CD8-positive, alpha-beta T cell (primary cell): ENCODE measurements at regions of chr7 and their contacts with region 1.

Region 1: GRCh38 chr7:81036057-81036456 is 117.2 kb upstream of the SEMA3C start:
- DNase-seq: no peak
- ATAC-seq: no peak
- H3K4me3 ChIP-seq: no peak overlapping the region
- H3K4me3 Mint-ChIP-seq: no peak overlapping the region
- H3K27ac ChIP-seq: no peak overlapping the region
- H3K27ac Mint-ChIP-seq: no peak overlapping the region
- H3K4me1 ChIP-seq: no peaks in the 10 kb centered on the region
- H3K4me1 Mint-ChIP-seq: no peaks in the 10 kb centered on the region
- H3K27me3 ChIP-seq: no peaks in the 10 kb centered on the region
- H3K27me3 Mint-ChIP-seq: no peaks in the 10 kb centered on the region
- CTCF ChIP-seq: no peak

Region 2: DNA sequence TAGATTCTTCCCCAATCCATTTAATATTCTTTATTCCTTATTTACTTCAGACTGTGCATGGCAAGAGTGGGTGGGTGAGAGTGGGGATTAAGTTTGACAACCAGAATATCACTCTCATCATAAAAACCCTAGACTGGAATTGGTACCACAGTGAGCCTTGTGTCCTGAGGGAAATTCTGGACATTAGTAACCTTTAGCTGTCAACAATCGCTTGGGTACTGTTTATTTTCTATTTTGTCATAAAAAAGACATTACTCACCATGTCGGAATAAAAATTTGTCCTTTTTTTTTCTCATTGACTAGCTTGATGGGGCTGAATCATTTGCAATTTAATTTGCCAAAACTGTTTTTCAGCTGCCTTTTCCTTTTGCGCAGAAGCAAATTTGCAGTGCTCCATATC is 58.9 kb after region 1 on chr7:
- CTCF ChIA-PET with region 1: no interaction called
- POLR2A ChIA-PET with region 1: no interaction called
- intact Hi-C with region 1: loop called in 1 of 2 experiments (anchors 10 kb)
- DNase-seq: no peak
- ATAC-seq: no peak
- H3K4me3 ChIP-seq: no peak overlapping the region
- H3K4me3 Mint-ChIP-seq: no peak overlapping the region
- H3K27ac ChIP-seq: no peak overlapping the region
- H3K27ac Mint-ChIP-seq: no peak overlapping the region
- H3K4me1 ChIP-seq: no peaks in the 10 kb centered on the region
- H3K4me1 Mint-ChIP-seq: no peaks in the 10 kb centered on the region
- H3K27me3 ChIP-seq: no peaks in the 10 kb centered on the region
- H3K27me3 Mint-ChIP-seq: no peaks in the 10 kb centered on the region
- CTCF ChIP-seq: no peak

Region 3: GRCh38 chr7:81410471-81411125 is 374.5 kb after region 1 on chr7:
- CTCF ChIA-PET with region 1: no interaction called
- POLR2A ChIA-PET with region 1: no interaction called
- intact Hi-C with region 1: loop called in 1 of 2 experiments (anchors 5 kb)
- DNase-seq: no peak
- ATAC-seq: no peak
- H3K4me3 ChIP-seq: no peak overlapping the region
- H3K4me3 Mint-ChIP-seq: no peak overlapping the region
- H3K27ac ChIP-seq: no peak overlapping the region
- H3K27ac Mint-ChIP-seq: no peak overlapping the region
- H3K4me1 ChIP-seq: no peaks in the 10 kb centered on the region
- H3K4me1 Mint-ChIP-seq: no peaks in the 10 kb centered on the region
- H3K27me3 ChIP-seq: no peaks in the 10 kb centered on the region
- H3K27me3 Mint-ChIP-seq: no peaks in the 10 kb centered on the region
- CTCF ChIP-seq: no peak